ENCODE measurements at regions of chr3 and their contacts with region 1.

Region 1: GRCh38 chr3:146065573-146066006 is 95.4 kb downstream of the PLOD2 start:
- DNase-seq: no peak

Region 2: DNA sequence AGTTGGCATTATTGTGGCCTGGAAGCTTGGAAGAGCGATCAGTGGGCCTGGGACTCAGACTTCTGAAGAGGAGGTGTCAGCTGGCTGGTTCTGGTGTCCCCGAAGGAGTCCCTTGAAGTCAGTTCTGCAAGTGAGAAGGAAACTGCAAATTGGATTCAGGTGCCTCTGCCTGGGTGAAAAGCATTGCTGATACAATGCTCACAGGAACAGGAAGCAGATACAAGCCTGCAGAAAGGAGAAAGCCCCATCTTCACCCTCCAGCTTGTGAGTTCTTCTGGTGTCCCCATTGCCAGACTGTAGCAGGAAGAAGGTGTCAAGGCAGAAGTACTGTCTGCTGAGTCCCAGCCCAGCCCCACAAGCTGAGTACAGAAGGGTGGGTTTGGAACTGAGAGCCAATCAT is 175.9 kb before region 1 on chr3:
- intact Hi-C with region 1: no loop called
- DNase-seq: no peak

Region 3: GRCh38 chr3:146100825-146101444 is 35.3 kb after region 1 on chr3:
- intact Hi-C with region 1: no loop called
- DNase-seq: no peak

Region 4: GRCh38 chr3:146189519-146190173 is 124.1 kb after region 1 on chr3:
- intact Hi-C with region 1: loop called (anchors 2 kb)
- DNase-seq: no peak

Region 5: DNA sequence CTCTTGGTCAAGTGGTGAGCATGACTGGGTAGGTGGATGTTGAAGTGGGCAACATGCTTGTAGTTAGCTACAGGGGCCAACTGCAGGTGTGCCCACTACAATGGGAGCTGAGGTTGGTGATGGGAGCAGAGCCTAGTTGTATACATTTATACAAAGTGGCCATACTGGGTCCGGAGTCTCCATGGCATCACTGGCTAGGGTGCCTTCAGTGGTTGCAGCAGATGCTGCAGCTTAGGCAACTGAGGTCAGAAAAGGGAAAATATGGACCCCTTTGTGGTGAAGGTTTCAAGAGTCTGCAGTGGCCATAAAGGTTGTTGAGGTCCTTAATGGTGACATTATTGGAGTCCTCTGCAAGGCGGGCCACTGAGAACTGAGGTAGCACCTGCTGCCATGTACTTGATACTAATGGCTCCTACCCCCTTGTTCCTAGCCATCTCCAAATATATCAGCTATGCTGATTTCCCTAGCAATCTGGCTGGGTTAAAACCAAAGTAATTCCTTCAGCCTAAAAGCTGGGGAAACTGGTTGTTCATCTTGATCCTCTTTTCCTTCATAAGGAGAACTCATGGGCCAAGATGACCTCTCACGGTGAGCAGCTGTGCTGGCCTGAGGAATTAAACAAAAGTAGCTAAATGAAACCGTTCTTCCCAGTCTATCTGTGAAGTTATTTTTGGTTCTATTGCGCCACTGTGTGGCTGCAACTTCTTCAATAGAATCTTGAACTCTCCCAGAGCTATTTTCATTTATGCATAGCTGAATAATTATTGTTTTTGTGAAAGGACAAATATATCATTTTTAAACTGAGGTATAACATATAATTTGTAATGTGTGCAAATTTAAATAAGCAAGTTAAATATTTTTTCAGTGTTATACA is 261.3 kb after region 1 on chr3:
- intact Hi-C with region 1: loop called (anchors 2 kb)
- DNase-seq: no peak

Region 6: GRCh38 chr3:146577662-146578061 is 512.1 kb after region 1 on chr3:
- intact Hi-C with region 1: loop called (anchors 10 kb)
- DNase-seq: no peak